Activated T-helper 1 cell treated with anti-CD3 and anti-CD28 coated beads, Interleukin-12 subunit alpha, Interleukin-12 subunit beta, Interleukin-2, Interleukin-4 antibody, amounts not matched to agents 30 ng/mL and 10 ng/mL and 1 ng/mL, durations not matched to agents 14 hours and 24 hours and 36 hours (primary cell): ENCODE measurements at regions of chr12 and their contacts with region 1.

Region 1: DNA sequence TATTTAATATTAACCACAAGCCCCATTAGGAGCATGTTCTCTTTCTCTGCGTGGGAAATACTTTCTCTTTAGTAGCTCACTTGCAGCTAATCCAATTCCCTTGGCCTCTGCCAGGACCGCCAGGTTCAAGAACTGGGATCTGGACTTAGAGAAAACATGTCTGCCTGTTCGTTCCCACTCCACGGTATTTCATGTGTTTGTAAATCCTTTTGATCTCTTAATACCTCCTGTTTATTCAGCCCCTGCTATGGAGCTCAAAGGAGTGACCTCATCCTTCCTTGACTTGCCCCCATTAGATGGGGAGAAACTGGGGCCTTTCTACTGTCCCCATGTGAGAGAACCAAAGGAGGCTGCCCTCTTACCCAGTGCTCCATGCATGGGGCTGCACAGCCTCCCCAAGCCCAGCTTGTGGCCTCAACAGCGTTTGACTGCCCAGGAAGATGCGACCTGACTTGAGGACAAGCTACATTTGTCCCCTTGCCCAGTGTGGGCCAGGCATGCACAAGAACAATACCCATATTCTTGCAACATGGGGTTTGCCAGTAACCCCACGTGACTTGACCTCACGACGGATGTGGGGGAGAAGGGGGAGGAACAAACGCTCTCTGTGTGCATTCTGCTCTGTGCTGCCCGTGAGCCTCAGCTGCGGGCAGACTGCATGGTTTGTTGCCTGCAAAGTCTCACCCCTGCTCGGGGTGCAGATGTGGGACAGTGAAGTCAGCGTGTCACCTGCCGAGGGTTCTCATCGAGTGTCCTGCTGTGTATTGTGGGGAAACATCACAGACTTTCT is 30.3 kb downstream of the CD9 start:
- DNase-seq: peak; percentile 74
- H3K4me3 Mint-ChIP-seq: peak overlapping the region; percentile 58
- H3K27ac Mint-ChIP-seq: peak overlapping the region; percentile 92
- H3K4me1 Mint-ChIP-seq: peaks cover 20% of the 10 kb centered on the region
- H3K27me3 Mint-ChIP-seq: no peaks in the 10 kb centered on the region

Region 2: DNA sequence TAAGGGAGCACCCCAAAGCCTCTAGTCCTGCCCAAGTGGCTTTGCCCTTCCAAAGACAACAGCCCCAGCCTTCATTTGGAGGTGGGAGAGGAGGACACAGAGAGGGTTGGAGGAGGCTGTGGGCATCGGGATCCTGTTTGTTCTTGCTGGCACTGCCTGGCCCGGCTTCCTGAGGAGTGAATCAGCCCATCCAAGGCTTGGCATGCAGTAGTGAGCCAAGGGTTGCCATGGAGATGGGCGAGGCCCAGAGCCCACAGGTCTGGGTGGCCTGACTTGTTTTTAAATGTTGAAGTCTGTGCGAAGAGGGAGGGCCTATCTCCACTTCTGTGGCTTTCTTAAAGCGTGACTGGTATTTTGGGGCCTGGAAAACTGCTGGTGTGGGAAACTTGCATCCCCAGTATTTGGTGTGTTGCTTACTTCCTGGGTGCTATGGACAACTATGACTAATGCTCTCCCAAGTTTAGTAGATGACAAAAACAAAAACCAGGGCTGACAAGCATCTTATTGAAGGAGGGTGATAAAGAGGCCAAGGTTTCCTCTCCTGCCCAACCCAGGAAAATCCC is 14.5 kb before region 1 on chr12:
- intact Hi-C with region 1: loop called (anchors 1 kb)
- DNase-seq: no peak
- H3K4me3 Mint-ChIP-seq: peak overlapping the region; percentile 0
- H3K27ac Mint-ChIP-seq: peak overlapping the region; percentile 86
- H3K4me1 Mint-ChIP-seq: peaks cover 57% of the 10 kb centered on the region
- H3K27me3 Mint-ChIP-seq: peaks cover 4% of the 10 kb centered on the region